PC-9 (cell line): ENCODE measurements at regions of chr5 and their contacts with region 1.

Region 1: DNA sequence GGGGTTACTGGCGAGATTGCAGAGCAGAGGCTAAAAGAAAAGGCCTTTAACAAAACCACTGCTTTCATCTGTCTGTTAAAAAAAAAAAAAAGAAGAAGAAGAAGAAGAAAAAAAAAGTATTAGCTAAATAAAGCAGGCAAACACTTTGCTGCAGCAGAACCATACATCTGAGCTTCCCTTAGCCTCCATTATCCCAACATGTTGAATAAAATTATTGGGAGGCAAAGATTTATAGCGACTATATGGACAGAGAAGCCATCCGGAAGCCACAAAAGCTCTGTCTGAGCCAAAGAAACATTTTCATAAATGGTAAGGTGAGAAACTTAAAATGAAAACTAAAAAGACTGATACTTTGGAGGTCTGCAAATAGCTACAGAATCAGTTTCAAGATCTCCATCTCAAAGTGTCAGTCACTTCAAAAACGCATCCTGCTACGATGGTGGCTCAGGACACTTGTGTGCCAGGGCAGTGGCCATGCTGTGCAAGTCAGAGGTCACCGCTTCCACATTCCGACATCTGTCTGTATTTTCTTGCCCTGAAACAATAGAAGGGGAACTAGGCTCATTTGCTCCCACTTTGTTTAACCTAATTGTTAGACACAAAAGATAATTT is 9.6 kb downstream of the EFNA5 start:
- DNase-seq: no peak
- H3K4me3 ChIP-seq: no peak overlapping the region
- H3K27ac ChIP-seq: no peak overlapping the region; the same call in 1 of the 2 replicates
- H3K4me1 ChIP-seq: peaks cover 32% of the 10 kb centered on the region
- H3K27me3 ChIP-seq: no peaks in the 10 kb centered on the region
- CTCF ChIP-seq: no peak

Region 2: DNA sequence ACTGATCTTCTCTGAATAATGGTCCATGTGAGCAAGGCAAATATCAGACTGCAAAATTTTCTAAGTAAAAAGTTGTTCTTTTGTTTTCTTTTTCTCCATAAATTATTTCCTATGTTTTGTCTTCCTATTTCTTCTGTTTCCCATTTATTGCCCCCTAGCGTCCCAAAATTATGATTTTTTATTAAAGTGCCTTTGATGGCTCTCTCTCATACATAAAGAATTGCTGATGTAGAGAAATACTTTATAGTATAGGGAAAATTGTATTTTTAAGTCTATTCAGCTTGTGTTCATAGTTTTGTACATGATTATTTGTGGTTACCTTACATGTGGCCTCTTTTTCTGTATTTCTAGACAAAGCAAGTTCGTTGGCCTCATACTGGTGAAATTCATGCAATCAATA is 1021.7 kb before region 1 on chr5:
- CTCF ChIA-PET with region 1: interaction called, 17 read pairs
- POLR2A ChIA-PET with region 1: no interaction called
- intact Hi-C with region 1: no loop called
- DNase-seq: no peak
- H3K4me3 ChIP-seq: no peak overlapping the region
- H3K27ac ChIP-seq: no peak overlapping the region
- H3K4me1 ChIP-seq: no peaks in the 10 kb centered on the region
- H3K27me3 ChIP-seq: no peaks in the 10 kb centered on the region
- CTCF ChIP-seq: 0 out of 2 replicates have a peak, but pooled peaks have one; percentile 19

Region 3: GRCh38 chr5:107504424-107504823 is 156.7 kb before region 1 on chr5:
- CTCF ChIA-PET with region 1: no interaction called
- POLR2A ChIA-PET with region 1: interaction called, 18 read pairs
- intact Hi-C with region 1: no loop called
- DNase-seq: no peak
- H3K4me3 ChIP-seq: no peak overlapping the region
- H3K27ac ChIP-seq: no peak overlapping the region
- H3K4me1 ChIP-seq: no peaks in the 10 kb centered on the region
- H3K27me3 ChIP-seq: no peaks in the 10 kb centered on the region
- CTCF ChIP-seq: no peak

Region 4: DNA sequence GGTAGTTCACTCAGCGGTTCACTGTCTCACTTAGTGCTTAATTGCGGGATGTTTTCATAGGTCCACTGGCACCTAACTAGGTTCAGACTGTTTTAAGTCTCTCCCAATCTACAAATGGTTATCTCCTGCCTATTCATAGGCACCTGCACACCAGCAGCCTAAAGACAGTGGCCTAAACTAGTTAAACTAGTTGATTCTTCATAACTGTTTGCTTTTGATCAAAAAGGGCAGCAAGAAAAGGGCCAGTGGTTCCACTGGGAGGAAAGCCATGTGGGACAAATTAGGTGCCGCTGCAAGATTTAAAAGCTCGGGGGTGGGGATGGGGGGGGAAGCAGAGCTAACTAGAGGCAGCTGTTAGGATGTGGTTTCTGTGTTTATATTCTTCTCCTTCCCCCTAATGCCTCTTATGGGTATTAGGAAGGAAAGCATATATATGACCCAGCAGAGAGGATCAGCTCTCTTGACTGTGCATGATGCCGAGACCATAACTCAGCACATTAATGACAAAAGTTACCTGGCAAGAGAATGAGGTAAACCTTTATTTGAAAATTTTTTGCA is 56.2 kb before region 1 on chr5:
- CTCF ChIA-PET with region 1: no interaction called
- POLR2A ChIA-PET with region 1: no interaction called
- intact Hi-C with region 1: no loop called
- DNase-seq: no peak
- H3K4me3 ChIP-seq: no peak overlapping the region
- H3K27ac ChIP-seq: no peak overlapping the region
- H3K4me1 ChIP-seq: no peaks in the 10 kb centered on the region
- H3K27me3 ChIP-seq: no peaks in the 10 kb centered on the region
- CTCF ChIP-seq: no peak

Region 5: DNA sequence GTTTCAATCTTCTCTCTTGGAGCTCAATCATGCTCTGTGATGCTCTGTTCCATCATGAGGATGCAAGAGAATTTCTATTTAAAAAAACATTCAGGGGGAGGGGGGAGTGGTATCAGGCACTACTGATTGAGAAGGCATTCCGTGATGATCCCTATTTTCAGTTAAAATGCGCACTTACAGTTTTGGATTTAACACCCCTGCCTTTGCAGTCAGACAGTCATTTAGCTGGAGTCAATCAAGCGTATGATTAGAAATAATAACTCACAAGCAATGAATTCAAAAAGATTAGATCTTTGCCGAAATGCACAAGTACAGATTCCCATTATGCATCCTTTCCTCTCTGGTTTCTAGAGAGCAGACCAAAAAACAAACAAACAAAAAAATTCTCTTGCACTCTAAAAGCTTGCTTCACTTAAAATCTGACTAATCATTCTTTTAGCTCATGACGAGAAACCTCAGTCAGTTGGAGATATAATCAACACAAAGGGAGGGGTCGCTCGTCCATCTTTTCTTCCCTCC is 45.8 kb before region 1 on chr5:
- CTCF ChIA-PET with region 1: no interaction called
- POLR2A ChIA-PET with region 1: interaction called, 12 read pairs
- intact Hi-C with region 1: no loop called
- DNase-seq: peak in 1 of 2 experiments; percentile 69
- H3K4me3 ChIP-seq: no peak overlapping the region
- H3K27ac ChIP-seq: no peak overlapping the region
- H3K4me1 ChIP-seq: peaks cover 28% of the 10 kb centered on the region; the same call in 1 of the 2 replicates
- H3K27me3 ChIP-seq: no peaks in the 10 kb centered on the region
- CTCF ChIP-seq: no peak